Breast epithelium (tissue), 4 donors: ENCODE measurements at regions of chr3 and their contacts with region 1.

Region 1: GRCh38 chr3:110789315-110789714 is 282.3 kb upstream of the NECTIN3 start:
- DNase-seq: no peak
- H3K4me3 ChIP-seq: no peak overlapping the region
- H3K27ac ChIP-seq: no peak overlapping the region
- H3K4me1 ChIP-seq: no peaks in the 10 kb centered on the region
- H3K27me3 ChIP-seq: no peaks in the 10 kb centered on the region
- CTCF ChIP-seq: no peak
- POLR2A ChIP-seq: no peak

Region 2: DNA sequence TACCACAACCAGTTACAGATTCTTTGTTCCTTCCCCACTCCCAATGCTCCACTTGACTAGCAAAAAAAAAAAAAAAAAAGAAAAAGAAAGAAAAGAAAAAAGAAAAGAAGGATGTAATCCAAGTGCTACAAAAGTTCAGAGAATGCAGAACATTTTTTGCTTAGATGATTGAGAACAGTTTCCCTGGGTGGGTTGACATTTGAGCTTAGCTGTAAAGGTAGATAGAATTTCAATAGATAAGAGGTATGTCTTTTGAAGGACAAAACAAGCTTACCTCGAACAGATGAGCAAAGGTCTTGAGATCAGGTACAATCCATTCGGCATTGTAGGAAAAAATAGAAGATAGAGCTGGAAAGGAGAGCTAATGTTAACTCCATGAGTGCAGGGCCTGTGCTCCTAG is 62.3 kb before region 1 on chr3:
- intact Hi-C with region 1: loop called (anchors 2 kb)
- DNase-seq: no peak
- H3K4me3 ChIP-seq: no peak overlapping the region
- H3K27ac ChIP-seq: no peak overlapping the region
- H3K4me1 ChIP-seq: no peaks in the 10 kb centered on the region
- H3K27me3 ChIP-seq: no peaks in the 10 kb centered on the region
- CTCF ChIP-seq: no peak
- POLR2A ChIP-seq: no peak

Region 3: GRCh38 chr3:110806924-110807323 is 17.6 kb after region 1 on chr3:
- intact Hi-C with region 1: no loop called
- DNase-seq: no peak
- H3K4me3 ChIP-seq: no peak overlapping the region
- H3K27ac ChIP-seq: no peak overlapping the region
- H3K4me1 ChIP-seq: no peaks in the 10 kb centered on the region
- H3K27me3 ChIP-seq: no peaks in the 10 kb centered on the region
- CTCF ChIP-seq: no peak
- POLR2A ChIP-seq: no peak